ENCODE measurements at regions of chr1 and their contacts with region 1.

Region 1: GRCh38 chr1:64966158-64966971 is at the start of gene JAK1:
- DNase-seq: peak; percentile 93
- H3K4me3 ChIP-seq: peak within 1 kb of the TSS; percentile 83
- H3K27ac ChIP-seq: peak within 1 kb of the TSS; percentile 69
- H3K4me1 ChIP-seq: peaks cover 51% of the 10 kb centered on the region
- CTCF ChIP-seq: no peak
- total RNA-seq, gene JAK1: 66.9 and 72.6 TPM in 2 replicates

Region 2: DNA sequence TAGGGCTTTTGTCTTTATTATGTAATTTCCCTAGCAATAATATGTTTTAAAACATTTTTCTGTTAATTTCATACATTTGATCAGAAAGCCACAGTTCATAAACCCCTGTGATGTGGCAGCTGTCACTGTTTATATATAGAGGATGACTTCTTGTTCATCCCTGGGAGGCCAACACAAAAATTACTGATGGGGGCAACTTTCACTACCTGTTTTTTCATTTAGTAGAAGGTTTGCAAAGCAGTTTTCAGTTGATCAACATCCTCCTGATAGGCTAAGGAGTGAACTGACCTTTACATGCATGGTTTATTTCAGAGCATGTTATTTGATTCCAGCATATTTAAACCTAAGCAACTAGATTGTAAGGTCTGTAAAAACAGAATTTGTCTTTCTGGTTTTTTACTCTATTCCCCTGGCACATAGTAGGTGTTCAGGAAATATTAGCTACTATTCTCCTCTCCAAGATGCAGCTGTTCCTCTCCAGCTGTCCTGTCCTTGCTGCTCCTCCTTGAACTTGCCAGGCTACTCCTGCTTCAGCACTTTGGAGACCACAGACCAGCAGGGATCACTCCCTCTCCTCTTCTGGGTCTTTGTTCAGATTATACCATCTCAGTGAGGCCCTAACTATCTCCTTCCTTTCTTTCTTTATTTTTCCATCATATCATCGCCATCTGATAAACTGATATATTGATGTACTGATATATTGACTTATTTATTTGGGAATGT is 1137.9 kb before region 1 on chr1:
- CTCF ChIA-PET with region 1: no interaction called
- POLR2A ChIA-PET with region 1: no interaction called
- intact Hi-C with region 1: loop called (anchors 2 kb)
- DNase-seq: peak; percentile 86
- H3K4me3 ChIP-seq: peak overlapping the region; percentile 41
- H3K27ac ChIP-seq: peak overlapping the region; percentile 90
- H3K4me1 ChIP-seq: peaks cover 61% of the 10 kb centered on the region
- CTCF ChIP-seq: no peak

Region 3: GRCh38 chr1:64864018-64864940 is 102.1 kb before region 1 on chr1:
- CTCF ChIA-PET with region 1: interaction called, 3 read pairs
- POLR2A ChIA-PET with region 1: interaction called, 21 read pairs
- intact Hi-C with region 1: loop called (anchors 1 kb)
- DNase-seq: peak; percentile 97
- H3K4me3 ChIP-seq: peak overlapping the region; percentile 44
- H3K27ac ChIP-seq: peak overlapping the region; percentile 80
- H3K4me1 ChIP-seq: peaks cover 51% of the 10 kb centered on the region
- CTCF ChIP-seq: 0 out of 2 replicates have a peak, but pooled peaks have one; percentile 10

Region 4: GRCh38 chr1:65045022-65045817 is 78.9 kb after region 1 on chr1:
- CTCF ChIA-PET with region 1: interaction called, 4 read pairs
- POLR2A ChIA-PET with region 1: interaction called, 13 read pairs
- intact Hi-C with region 1: loop called (anchors 2 kb)
- DNase-seq: peak; percentile 53
- H3K4me3 ChIP-seq: peak overlapping the region; percentile 29
- H3K27ac ChIP-seq: peak overlapping the region; percentile 70
- H3K4me1 ChIP-seq: peaks cover 41% of the 10 kb centered on the region
- CTCF ChIP-seq: no peak

Region 5: DNA sequence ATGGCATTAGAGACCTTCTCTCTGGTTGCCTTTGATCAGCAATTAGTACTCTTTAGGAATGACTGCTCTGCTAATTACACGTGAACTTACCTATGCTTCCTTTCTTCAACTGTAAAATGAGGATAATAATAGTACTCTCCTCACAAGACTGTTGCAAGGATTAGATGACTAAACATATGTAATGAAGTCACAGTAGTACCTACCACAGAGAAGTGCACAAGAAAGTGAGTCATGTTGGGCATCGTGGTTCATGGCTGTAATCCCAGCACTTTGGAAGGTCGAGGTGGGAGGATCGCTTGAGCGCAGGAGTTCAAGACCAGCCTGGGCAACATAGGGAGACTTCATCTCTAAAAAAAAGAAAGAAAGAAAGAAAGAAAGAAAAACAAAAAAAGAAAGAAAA is 113.6 kb after region 1 on chr1:
- CTCF ChIA-PET with region 1: no interaction called
- POLR2A ChIA-PET with region 1: no interaction called
- intact Hi-C with region 1: no loop called
- DNase-seq: no peak
- H3K4me3 ChIP-seq: no peak overlapping the region
- H3K27ac ChIP-seq: no peak overlapping the region
- H3K4me1 ChIP-seq: no peaks in the 10 kb centered on the region
- CTCF ChIP-seq: no peak

Region 6: DNA sequence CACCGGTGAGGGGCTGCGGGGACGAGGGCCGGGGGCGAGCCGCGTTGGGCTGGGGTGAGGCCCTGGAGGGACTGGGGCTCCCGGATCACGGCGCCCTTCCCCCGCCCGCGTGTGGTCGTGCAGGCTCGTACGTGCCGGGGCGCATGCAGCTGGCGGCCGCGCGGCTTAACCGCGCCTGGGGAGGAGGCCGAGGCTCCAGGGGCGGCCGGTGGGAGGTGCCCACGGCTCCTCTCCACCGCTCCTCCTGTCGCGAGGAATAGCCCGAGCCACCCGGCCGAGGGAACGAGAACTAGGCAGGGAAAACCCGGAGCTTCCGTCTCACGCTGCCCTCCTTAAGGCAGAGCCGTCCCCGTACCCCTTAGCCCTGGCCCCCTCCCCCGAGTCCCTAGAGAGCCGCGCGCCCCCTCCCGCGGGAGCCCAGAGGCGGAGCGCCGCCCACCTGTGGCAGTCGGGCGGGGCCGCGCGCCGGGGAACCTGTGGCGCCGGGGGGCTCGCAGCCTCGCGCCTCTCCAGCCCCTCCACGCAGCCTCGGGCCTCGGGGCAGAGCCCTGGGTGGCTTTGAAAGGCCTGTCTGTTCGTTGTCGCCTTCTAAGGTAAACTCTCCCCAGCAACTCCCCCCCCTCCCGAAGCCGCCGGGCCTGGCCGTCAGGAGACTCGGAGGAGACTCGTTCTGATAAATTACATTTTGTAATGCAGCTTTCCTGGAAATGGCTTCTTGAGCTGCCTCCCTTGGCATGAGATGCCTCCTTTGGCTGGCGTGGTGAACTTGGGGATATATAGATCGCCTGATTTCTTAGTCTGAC is 182.4 kb after region 1 on chr1:
- CTCF ChIA-PET with region 1: no interaction called
- POLR2A ChIA-PET with region 1: no interaction called
- intact Hi-C with region 1: no loop called
- DNase-seq: peak; percentile 2
- H3K4me3 ChIP-seq: no peak overlapping the region
- H3K27ac ChIP-seq: no peak overlapping the region
- H3K4me1 ChIP-seq: no peaks in the 10 kb centered on the region
- CTCF ChIP-seq: no peak

Region 7: GRCh38 chr1:65419681-65420589 is 453.6 kb after region 1 on chr1:
- CTCF ChIA-PET with region 1: no interaction called
- POLR2A ChIA-PET with region 1: no interaction called
- intact Hi-C with region 1: loop called (anchors 5 kb)
- DNase-seq: peak; percentile 97
- H3K4me3 ChIP-seq: peak overlapping the region; percentile 92
- H3K27ac ChIP-seq: peak overlapping the region; percentile 63
- H3K4me1 ChIP-seq: peaks cover 20% of the 10 kb centered on the region
- CTCF ChIP-seq: no peak

Measured in OCI-LY7 (cell line).